ENCODE measurements at regions of chr17 and their contacts with region 1.

Region 1: DNA sequence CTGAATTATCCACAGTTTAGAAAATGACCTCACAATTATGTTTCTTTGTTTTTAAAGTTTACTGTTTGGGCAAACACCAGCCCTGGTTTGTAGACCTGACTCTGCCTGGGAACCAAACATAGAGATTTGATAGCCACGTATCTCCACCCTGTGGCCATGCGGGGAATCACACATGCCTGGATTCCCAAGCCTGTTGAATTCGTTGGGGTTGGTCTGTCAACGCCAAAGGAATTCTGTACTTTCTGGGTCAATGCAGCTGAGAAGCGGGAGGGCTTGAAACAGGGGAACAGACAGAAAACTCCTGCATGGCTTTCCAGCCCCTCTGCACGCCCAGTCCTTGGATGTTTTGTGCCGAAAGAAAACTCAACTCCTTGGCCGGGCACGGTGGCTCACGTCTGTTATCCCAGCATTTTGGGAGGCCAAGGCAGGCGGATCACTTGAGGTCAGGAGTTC is 27.0 kb downstream of the CD300A start:
- DNase-seq: peak; percentile 61 to 82 (median 77)
- ATAC-seq: peak; percentile 79 to 82
- H3K4me3 ChIP-seq: no peak overlapping the region
- H3K27ac ChIP-seq: no peak overlapping the region
- H3K4me1 ChIP-seq: no peaks in the 10 kb centered on the region
- H3K27me3 ChIP-seq: no peaks in the 10 kb centered on the region

Region 2: DNA sequence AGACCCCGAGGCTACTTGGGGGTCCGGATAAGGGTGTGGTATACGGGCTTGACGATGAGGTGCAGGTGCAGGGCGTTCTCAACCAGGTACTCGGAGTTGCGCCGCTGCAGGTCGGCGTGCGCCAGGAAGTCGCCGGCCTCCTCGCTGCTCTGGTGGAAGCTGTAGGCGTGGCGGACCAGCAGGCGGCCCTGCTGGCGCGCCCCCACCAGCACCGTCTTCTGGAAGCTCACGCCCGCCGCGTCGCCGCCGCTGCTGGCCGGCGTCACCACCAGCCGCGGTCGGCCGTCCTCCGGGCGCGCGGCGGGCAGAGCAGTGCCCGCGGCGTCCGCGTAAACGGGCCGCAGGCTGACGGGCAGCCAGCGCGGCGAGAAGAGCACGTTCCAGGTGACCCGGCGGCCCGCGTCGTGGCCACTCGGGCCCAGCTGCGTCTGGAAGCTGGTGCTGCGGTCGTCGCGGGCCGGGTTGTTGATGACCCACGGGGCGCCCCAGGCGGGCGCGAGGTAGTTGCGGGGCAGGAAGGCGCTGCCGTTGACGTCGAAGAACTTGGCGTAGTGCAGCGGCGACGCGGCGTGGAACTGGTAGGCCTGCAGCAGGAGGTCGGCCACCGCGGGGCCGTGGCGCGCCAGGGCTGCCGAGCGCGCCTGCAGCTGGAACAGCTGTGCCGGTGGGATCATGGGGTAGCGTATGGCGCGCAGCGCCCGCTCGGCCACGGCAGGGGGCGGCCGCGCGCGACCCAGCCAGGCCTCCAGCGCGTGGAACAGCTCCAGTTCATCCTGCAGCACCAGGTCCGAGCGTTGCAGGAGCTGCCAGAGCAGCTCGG is 136.6 kb before region 1 on chr17:
- intact Hi-C with region 1: no loop called
- DNase-seq: peak in 1 of 3 donors; percentile 63
- ATAC-seq: peak; percentile 10 to 34
- H3K4me3 ChIP-seq: peak overlapping the region; percentile 3
- H3K27ac ChIP-seq: no peak overlapping the region
- H3K4me1 ChIP-seq: no peaks in the 10 kb centered on the region
- H3K27me3 ChIP-seq: no peaks in the 10 kb centered on the region

Region 3: GRCh38 chr17:74368092-74369081 is 125.0 kb before region 1 on chr17:
- intact Hi-C with region 1: loop called in 1 of 4 experiments (anchors 2 kb)
- DNase-seq: peak; percentile 68 to 90 (median 88)
- ATAC-seq: peak; percentile 70 to 83
- H3K4me3 ChIP-seq: no peak overlapping the region
- H3K27ac ChIP-seq: no peak overlapping the region
- H3K4me1 ChIP-seq: no peaks in the 10 kb centered on the region
- H3K27me3 ChIP-seq: no peaks in the 10 kb centered on the region